ENCODE measurements at regions of chr4 and their contacts with region 1.

Region 1: DNA sequence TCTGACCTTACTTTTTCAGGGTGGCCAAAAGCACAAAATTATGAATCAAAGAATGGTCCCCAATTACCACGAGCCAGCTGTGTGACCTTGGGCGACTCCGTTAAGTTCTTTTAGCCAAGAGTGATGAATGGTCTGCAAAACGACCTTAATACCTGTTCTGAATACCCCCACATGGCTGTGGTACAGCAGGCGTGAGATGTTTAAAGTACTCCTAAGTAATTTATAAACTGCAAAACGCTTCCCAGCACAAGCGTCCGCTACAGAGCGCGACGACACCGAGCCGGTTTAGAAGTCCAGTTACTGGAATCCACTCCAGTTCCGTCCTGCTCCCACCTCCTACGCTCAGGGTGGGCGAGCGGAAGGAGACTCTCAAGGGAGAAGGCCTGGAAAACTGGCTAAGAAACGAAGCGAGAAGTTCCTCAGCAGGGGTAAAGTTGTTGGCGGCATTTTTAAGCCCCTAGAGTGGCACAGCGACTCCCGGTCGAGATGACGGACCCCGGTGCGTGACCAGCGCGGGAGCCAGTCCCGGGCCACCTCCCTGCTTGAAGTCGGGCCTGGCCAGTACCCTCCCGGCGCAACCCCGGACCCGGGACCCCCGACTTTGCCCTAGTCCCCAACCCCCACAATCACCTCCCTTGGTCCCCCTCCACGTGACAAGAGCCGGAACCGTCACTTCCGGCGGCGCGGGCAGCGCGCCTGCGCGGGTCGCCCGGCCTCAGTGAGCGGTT is 683 bp upstream of the BMP2K start:
- DNase-seq: peak; percentile 77
- H3K4me3 ChIP-seq: peak overlapping the region; percentile 77 to 91 (median 88)
- H3K27ac ChIP-seq: peak overlapping the region; percentile 97
- H3K4me1 ChIP-seq: peaks cover 24% of the 10 kb centered on the region
- H3K27me3 ChIP-seq: no peaks in the 10 kb centered on the region
- CTCF ChIP-seq: no peak
- POLR2A ChIP-seq: peak; percentile 82

Region 2: DNA sequence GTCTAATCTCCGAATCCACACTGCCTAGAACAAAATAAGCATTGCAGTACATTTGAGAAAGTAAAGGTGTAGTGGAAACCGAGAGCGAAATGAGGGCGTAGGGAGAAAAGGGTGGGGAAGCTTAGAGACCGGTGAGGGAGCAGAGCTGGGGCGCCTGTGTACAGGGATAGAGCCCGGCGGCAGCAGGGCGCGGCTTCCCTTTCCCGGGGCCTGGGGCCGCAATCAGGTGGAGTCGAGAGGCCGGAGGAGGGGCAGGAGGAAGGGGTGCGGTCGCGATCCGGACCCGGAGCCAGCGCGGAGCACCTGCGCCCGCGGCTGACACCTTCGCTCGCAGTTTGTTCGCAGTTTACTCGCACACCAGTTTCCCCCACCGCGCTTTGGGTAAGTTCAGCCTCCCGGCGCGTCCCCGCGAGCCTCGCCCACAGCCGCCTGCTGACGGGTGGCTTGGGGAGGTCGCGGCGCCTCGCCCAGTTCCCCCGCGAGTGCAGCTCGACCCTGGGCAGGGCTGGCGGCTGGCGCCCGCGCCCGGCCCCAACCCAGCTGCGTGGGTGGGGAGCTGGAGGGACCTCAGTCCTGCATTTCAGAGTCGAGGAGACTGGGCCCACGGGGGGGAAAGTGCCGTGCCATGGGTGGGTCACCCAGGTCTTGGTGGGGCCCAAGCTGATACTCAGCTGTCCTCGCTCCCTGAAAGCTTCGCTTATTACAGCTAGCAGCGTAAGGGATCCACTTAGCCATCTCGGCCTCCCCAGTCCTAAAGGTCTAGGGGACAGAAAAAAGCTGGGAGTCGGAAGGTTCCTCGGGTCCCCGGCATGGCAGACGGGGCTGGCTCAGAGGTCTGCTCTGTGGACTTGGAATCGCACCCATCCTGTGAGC is 223.8 kb before region 1 on chr4 and contains the start of gene ANXA3:
- CTCF ChIA-PET with region 1: no interaction called
- POLR2A ChIA-PET with region 1: no interaction called
- dilution Hi-C with region 1: no loop called
- intact Hi-C with region 1: loop called (anchors 5 kb)
- DNase-seq: peak; percentile 39
- H3K4me3 ChIP-seq: peak within 1 kb of the TSS; percentile 38 to 89 (median 63)
- H3K27ac ChIP-seq: peak within 1 kb of the TSS; percentile 98
- H3K4me1 ChIP-seq: peaks cover 26% of the 10 kb centered on the region
- H3K27me3 ChIP-seq: no peaks in the 10 kb centered on the region
- CTCF ChIP-seq: peak in 1 of 2 donors; percentile 4
- POLR2A ChIP-seq: peak; percentile 63
- total RNA-seq, gene ANXA3: 73.8 and 78.4 TPM in 2 replicates

Region 3: DNA sequence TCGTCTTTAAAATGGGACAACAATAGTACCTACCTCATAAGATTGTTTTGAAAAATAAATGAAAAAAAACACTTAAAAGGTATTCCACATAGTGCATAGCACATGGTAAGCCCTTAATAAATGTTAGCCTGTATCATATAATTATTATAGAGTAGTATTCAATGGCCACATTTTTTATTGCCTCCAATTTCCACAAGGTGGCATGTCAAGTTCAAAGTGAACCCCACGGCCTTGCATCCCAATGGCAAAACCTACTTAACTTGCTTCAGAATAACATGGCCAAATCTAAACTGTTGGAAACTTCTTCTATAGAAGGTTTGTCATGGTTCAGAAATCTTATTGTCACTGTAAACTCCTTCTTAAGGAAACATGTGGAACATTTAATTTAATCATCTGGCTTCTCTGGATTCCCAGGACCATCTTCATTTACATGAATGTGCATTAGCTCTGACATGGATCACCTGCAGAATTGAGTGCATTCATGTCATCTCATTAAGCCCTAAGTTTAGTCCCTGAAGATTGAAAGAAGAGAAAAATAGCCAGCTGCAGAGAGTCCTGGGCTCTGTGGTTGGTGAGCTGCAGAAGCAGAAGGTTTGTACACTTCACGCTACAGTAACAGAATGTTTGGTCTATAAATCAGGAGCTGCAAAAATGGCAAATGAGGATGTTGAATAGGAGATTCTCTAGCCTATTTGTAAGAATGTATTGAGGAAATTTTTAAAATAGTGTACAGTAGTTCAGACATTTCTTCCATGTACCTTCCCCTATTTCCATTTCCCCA is 162.9 kb before region 1 on chr4:
- CTCF ChIA-PET with region 1: interaction called, 17 read pairs
- POLR2A ChIA-PET with region 1: no interaction called
- dilution Hi-C with region 1: no loop called
- intact Hi-C with region 1: loop called (anchors 1 kb)
- DNase-seq: peak; percentile 62
- H3K4me3 ChIP-seq: no peak overlapping the region
- H3K27ac ChIP-seq: no peak overlapping the region
- H3K4me1 ChIP-seq: no peaks in the 10 kb centered on the region
- H3K27me3 ChIP-seq: no peaks in the 10 kb centered on the region
- CTCF ChIP-seq: peak; percentile 45 to 46
- POLR2A ChIP-seq: no peak

Region 4: DNA sequence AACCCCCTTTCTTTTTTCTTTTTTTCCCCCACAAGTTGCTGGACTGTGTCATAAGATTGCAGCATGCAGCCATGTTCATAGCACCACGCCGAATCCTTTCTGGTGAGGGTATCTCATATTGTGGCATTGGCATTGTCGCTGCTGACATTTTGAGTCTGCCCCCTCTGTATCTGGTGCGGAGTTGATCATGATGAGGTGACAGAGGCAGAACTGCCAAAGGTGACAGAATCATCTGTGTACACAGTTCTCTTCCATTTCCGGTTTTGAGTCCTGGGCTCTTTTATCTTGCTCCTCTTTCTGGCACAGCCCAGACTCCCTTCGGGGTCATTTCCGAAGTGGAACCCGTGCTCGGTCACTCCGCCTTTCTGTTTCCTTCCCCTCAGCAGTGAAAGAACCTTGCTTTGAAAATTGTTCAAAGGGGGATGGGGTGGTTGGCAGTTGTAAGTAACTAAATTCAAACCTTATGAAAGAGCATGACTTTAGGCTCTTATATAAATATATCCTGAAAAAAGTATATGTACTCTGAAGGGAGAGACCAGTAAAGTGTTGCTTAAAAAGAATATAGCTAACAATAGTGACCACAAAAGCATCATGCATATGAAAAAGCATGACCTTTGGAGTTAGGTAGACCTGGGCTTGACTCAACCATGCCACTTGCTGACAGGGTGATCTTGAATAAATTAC is 54.3 kb before region 1 on chr4:
- CTCF ChIA-PET with region 1: interaction called, 4 read pairs
- POLR2A ChIA-PET with region 1: no interaction called
- dilution Hi-C with region 1: no loop called
- intact Hi-C with region 1: loop called (anchors 2 kb)
- DNase-seq: peak; percentile 72
- H3K4me3 ChIP-seq: peak overlapping the region in 1 of 3 experiments; percentile 1
- H3K27ac ChIP-seq: no peak overlapping the region
- H3K4me1 ChIP-seq: peaks cover 19% of the 10 kb centered on the region
- H3K27me3 ChIP-seq: no peaks in the 10 kb centered on the region
- CTCF ChIP-seq: no peak
- POLR2A ChIP-seq: no peak